ENCODE measurements at regions of chr15 and their contacts with region 1.

Region 1: GRCh38 chr15:91852741-91853510 is 582 bp upstream of the SLCO3A1 start:
- DNase-seq: peak; percentile 70 to 89 (median 81)
- H3K4me3 ChIP-seq: peak overlapping the region in 1 of 2 donors; percentile 48
- H3K4me3 Mint-ChIP-seq: peak overlapping the region; percentile 83 to 93 (median 87)
- H3K27ac ChIP-seq: peak overlapping the region; percentile 87
- H3K27ac Mint-ChIP-seq: peak overlapping the region; percentile 86 to 95 (median 94)
- H3K4me1 ChIP-seq: peaks cover 69% of the 10 kb centered on the region
- H3K4me1 Mint-ChIP-seq: peaks cover 50 to 79% (median 60%) of the 10 kb centered on the region in 4 donors
- H3K27me3 ChIP-seq: no peaks in the 10 kb centered on the region
- H3K27me3 Mint-ChIP-seq: no peaks in the 10 kb centered on the region

Region 2: DNA sequence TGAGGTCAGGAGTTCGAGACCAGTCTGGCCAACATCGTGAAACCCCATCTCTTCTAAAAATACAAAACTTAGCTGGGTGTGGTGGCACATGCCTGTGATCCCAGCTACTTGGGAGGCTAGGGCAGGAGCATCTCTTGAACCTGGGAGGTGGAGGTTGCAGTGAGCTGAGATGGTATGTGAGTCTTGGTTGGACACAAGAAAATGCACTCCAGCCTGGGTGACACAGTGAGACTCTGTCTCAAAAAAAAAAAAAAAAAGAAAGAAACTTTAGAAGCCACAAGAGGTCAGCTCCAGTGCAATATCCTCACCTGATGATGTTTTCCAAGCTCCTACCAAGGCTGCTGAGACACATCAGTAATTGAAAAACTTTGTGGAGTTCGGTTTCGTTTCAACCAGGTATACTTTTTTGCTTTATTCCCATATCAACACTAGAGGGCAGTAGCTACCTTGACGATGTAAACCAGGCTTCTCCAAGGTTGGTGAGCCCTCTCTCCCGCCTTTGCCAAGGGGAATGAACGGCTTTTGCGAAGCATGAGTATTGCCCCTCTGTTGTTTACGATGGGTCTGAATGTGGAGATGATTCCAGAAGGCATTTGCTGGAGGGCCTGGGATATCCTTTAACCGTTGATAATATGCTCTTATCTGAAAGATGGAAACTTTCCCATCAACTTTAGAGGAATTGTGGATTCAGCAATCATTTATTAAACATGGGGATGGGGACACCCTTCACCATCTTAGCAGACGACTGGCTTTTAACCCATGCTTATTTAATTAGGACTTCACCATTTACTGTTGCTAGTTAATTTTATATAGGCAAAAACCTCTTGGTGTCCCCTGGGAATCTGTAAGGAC is 550.1 kb before region 1 on chr15:
- CTCF ChIA-PET with region 1: interaction called, 4 read pairs
- POLR2A ChIA-PET with region 1: no interaction called
- intact Hi-C with region 1: loop called (anchors 1 kb)
- DNase-seq: peak in 4 of 5 donors; percentile 54 to 63 (median 58)
- H3K4me3 ChIP-seq: no peak overlapping the region
- H3K4me3 Mint-ChIP-seq: peak overlapping the region in 6 of 8 donors; percentile 40 to 76 (median 58)
- H3K27ac ChIP-seq: no peak overlapping the region
- H3K27ac Mint-ChIP-seq: peak overlapping the region in 4 of 7 donors; percentile 1 to 65 (median 32)
- H3K4me1 ChIP-seq: peaks cover 47% of the 10 kb centered on the region
- H3K4me1 Mint-ChIP-seq: peaks cover 21 to 46% (median 34%) of the 10 kb centered on the region in 4 donors
- H3K27me3 ChIP-seq: no peaks in the 10 kb centered on the region
- H3K27me3 Mint-ChIP-seq: peaks cover 2 to 6% of the 10 kb centered on the region in 2 donors

Region 3: GRCh38 chr15:91706322-91707032 is 146.4 kb before region 1 on chr15:
- CTCF ChIA-PET with region 1: interaction called, 46 read pairs
- POLR2A ChIA-PET with region 1: interaction called, 9 read pairs
- intact Hi-C with region 1: loop called (anchors 2 kb)
- DNase-seq: peak; percentile 82 to 92 (median 86)
- H3K4me3 ChIP-seq: no peak overlapping the region
- H3K4me3 Mint-ChIP-seq: peak overlapping the region in 7 of 8 donors; percentile 19 to 89 (median 71)
- H3K27ac ChIP-seq: no peak overlapping the region
- H3K27ac Mint-ChIP-seq: peak overlapping the region; percentile 68 to 92 (median 81)
- H3K4me1 ChIP-seq: peaks cover 17% of the 10 kb centered on the region
- H3K4me1 Mint-ChIP-seq: peaks cover 8 to 32% (median 14%) of the 10 kb centered on the region in 4 donors
- H3K27me3 ChIP-seq: no peaks in the 10 kb centered on the region
- H3K27me3 Mint-ChIP-seq: peaks cover 0 to 2% of the 10 kb centered on the region in 2 donors

Region 4: GRCh38 chr15:91887921-91888373 is 35.0 kb after region 1 on chr15:
- CTCF ChIA-PET with region 1: interaction called, 10 read pairs
- POLR2A ChIA-PET with region 1: no interaction called
- intact Hi-C with region 1: no loop called
- DNase-seq: no peak
- H3K4me3 ChIP-seq: no peak overlapping the region
- H3K4me3 Mint-ChIP-seq: no peak overlapping the region
- H3K27ac ChIP-seq: no peak overlapping the region
- H3K27ac Mint-ChIP-seq: peak overlapping the region in 1 of 7 donors; percentile 2
- H3K4me1 ChIP-seq: peaks cover 14% of the 10 kb centered on the region
- H3K4me1 Mint-ChIP-seq: peaks cover 32 to 68% (median 43%) of the 10 kb centered on the region in 4 donors
- H3K27me3 ChIP-seq: no peaks in the 10 kb centered on the region
- H3K27me3 Mint-ChIP-seq: no peaks in the 10 kb centered on the region

Region 5: DNA sequence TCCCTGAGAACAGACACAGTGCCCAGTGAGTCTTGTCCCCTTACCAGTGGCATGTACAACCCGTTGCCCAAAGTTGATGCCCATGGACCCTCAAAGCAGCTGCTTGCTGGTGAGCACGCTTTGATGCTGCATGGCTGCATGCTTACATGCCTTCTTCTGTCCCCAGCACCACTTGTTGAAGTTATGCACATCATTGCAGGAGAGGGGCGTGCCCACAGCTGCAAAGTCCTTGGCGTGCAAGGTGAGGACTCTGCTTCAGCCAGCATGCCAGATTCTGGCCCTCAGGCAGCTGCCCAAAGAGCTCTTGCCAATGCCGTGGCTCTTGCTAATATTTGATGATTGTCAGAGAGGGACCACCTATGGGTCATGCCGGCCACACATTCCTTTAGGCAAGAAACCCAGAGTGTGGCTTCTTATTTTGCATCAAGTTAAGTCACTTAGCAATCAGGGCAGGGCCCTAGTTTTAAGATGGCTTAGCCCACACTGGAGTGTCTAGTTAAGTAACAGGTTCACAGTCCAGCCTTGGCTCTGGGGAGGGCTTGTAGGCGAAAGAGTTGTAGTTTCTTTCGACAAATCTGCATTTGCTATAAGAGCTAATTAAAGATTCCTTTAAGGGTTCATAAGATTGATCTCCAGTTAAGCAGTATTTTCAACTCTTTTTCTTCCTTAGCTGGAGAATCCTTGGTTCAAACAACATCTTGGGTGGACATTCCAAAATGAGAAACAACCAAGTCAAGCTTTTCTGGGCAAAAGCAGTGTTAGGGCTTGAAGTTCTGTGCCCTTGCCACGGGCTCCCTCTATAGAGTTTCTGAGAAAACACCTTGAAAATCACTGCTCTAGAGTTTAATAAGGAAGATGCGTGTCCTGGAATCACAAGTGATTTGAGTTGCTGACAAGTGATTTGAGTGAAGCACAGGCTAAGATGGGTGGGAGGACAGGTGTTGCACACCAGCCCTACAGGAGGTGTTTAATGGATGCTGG is 129.2 kb after region 1 on chr15:
- CTCF ChIA-PET with region 1: interaction called, 14 read pairs
- POLR2A ChIA-PET with region 1: no interaction called
- intact Hi-C with region 1: no loop called
- DNase-seq: no peak
- H3K4me3 ChIP-seq: no peak overlapping the region
- H3K4me3 Mint-ChIP-seq: no peak overlapping the region
- H3K27ac ChIP-seq: no peak overlapping the region
- H3K27ac Mint-ChIP-seq: peak overlapping the region in 2 of 7 donors; percentile 22 to 29
- H3K4me1 ChIP-seq: no peaks in the 10 kb centered on the region
- H3K4me1 Mint-ChIP-seq: peaks cover 25 to 59% (median 39%) of the 10 kb centered on the region in 4 donors
- H3K27me3 ChIP-seq: no peaks in the 10 kb centered on the region
- H3K27me3 Mint-ChIP-seq: no peaks in the 10 kb centered on the region

Region 6: DNA sequence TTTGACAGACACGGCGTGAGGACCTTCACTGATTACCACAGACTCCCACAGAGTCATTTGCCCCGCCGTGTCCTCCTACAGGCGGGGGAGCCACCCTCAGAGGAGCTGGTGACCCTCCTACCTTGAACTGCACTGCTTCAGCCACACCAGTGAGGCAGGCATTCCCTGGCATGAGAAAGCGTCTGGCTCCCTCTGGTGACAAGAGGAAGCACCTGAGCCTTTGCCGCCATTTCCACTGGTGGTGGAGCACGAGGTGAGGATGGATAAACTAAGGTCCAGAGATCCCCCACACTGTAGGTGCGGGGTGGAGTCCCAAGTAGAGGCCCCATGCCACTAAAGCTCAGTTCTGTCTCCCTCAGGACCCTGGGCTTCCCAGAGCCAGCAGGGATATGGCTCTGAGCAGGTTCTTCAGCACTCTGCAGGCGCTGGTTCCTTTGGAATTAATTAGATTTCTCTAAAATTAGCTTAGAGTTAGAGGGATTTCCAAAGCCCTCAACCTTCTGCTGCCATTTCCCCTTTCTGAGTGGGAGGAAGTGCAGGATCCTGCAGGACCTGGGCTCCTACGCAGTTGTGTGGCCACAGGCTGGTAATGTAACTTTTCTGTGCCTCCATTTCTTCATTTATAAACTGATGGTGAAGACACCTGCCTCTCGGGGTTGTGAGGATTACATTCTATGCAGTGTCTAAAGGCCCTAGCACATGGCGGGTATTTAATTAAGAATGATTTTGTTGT is 224.6 kb after region 1 on chr15:
- CTCF ChIA-PET with region 1: interaction called, 116 read pairs
- POLR2A ChIA-PET with region 1: interaction called, 3 read pairs
- intact Hi-C with region 1: loop called (anchors 1 kb)
- DNase-seq: peak; percentile 48 to 58 (median 55)
- H3K4me3 ChIP-seq: no peak overlapping the region
- H3K4me3 Mint-ChIP-seq: no peak overlapping the region
- H3K27ac ChIP-seq: no peak overlapping the region
- H3K27ac Mint-ChIP-seq: peak overlapping the region in 2 of 7 donors; percentile 42 to 69
- H3K4me1 ChIP-seq: peaks cover 51% of the 10 kb centered on the region
- H3K4me1 Mint-ChIP-seq: peaks cover 32 to 59% (median 40%) of the 10 kb centered on the region in 4 donors
- H3K27me3 ChIP-seq: no peaks in the 10 kb centered on the region
- H3K27me3 Mint-ChIP-seq: no peaks in the 10 kb centered on the region

Measured in CD4-positive, alpha-beta memory T cell (primary cell).